Activated CD8-positive, alpha-beta T cell treated with anti-CD3 and anti-CD28 coated beads, Interleukin-2, amount 10 ng/mL, durations not matched to agents 7 days and 5 days (primary cell): ENCODE measurements at regions of chr18 and their contacts with region 1.

Region 1: DNA sequence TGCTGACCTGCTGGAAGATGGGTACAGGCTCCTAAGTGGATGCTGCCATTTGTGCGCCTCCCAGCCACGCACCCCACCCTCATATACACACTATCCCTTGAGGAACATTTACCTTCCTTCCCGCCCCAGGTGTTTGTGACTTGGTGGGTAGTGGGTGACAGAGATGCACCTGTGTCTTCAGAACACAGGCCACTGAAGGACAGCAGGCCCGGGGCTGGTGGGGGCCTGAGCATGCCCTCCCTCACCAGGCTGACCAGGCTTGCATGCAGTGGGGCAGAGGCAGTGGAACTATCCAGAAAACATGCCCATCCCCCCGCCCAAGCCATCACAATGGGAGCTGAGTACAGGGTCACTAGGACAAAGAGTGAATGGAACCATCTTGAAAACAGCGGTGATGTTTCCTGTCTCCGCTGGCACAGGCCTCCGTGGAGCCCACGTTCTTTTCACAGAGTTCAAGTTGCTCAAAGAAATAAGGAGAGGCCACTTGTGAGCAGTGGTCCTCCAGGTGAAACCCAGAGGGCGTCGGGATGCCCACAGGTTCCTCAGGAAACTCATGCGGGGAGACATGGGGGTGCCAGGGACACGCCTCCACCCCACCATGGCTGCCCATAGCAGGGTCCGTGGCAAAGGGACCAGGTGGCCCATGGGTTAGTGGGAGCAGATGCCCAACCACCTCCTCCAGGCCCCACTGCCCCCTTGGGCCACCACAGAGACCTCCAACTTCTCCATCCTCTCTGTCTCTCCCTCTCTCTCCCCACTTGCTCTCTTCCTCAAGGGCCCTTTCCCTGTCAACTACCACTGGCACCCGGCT is 90.9 kb downstream of the MALT1 start:
- DNase-seq: peak; percentile 18
- ATAC-seq: no peak
- H3K4me3 Mint-ChIP-seq: no peak overlapping the region
- H3K27ac Mint-ChIP-seq: peak overlapping the region; percentile 12
- H3K4me1 Mint-ChIP-seq: peaks cover 41% of the 10 kb centered on the region
- H3K27me3 Mint-ChIP-seq: peaks cover 29% of the 10 kb centered on the region

Region 2: DNA sequence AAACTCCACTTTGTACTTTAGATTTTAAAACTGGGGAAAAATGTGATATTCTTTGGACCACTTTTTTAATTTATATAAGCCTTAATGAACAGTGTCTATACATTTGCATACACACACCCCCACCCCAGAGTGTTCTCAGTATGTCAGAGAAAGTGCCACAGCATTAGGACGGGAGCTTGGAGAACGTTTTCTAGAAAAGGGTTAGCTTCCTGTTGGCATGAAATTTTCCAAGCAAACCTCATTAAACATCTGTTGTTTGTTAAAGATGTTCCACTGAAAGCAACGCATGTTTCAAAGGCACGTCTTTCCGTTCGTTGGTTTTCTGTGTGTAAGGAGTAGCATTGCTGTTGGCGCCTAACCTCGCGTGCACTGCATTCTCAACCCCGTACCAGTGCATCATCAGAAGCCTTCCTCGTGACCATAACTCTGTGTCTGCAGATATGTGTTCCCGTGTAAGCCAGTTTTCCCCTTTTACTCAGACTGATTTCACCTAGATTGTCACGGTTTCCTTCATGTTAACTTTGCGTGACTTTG is 361.8 kb before region 1 on chr18:
- CTCF ChIA-PET with region 1: interaction called, 15 read pairs
- POLR2A ChIA-PET with region 1: no interaction called
- DNase-seq: no peak
- ATAC-seq: no peak
- H3K4me3 Mint-ChIP-seq: no peak overlapping the region
- H3K27ac Mint-ChIP-seq: no peak overlapping the region
- H3K4me1 Mint-ChIP-seq: peaks cover 13% of the 10 kb centered on the region
- H3K27me3 Mint-ChIP-seq: no peaks in the 10 kb centered on the region

Region 3: GRCh38 chr18:58501066-58501896 is 260.9 kb before region 1 on chr18:
- CTCF ChIA-PET with region 1: interaction called, 31 read pairs
- POLR2A ChIA-PET with region 1: interaction called, 3 read pairs
- DNase-seq: no peak
- ATAC-seq: no peak
- H3K4me3 Mint-ChIP-seq: no peak overlapping the region
- H3K27ac Mint-ChIP-seq: no peak overlapping the region
- H3K4me1 Mint-ChIP-seq: peaks cover 5% of the 10 kb centered on the region
- H3K27me3 Mint-ChIP-seq: peaks cover 17% of the 10 kb centered on the region

Region 4: GRCh38 chr18:58605027-58606020 is 156.9 kb before region 1 on chr18:
- CTCF ChIA-PET with region 1: interaction called, 16 read pairs
- POLR2A ChIA-PET with region 1: no interaction called
- DNase-seq: peak; percentile 40
- ATAC-seq: peak; percentile 75
- H3K4me3 Mint-ChIP-seq: no peak overlapping the region
- H3K27ac Mint-ChIP-seq: no peak overlapping the region
- H3K4me1 Mint-ChIP-seq: peaks cover 30% of the 10 kb centered on the region
- H3K27me3 Mint-ChIP-seq: peaks cover 3% of the 10 kb centered on the region

Region 5: GRCh38 chr18:58699551-58699950 is 62.6 kb before region 1 on chr18:
- CTCF ChIA-PET with region 1: interaction called, 10 read pairs
- POLR2A ChIA-PET with region 1: no interaction called
- DNase-seq: no peak
- ATAC-seq: no peak
- H3K4me3 Mint-ChIP-seq: no peak overlapping the region
- H3K27ac Mint-ChIP-seq: no peak overlapping the region
- H3K4me1 Mint-ChIP-seq: peaks cover 35% of the 10 kb centered on the region
- H3K27me3 Mint-ChIP-seq: no peaks in the 10 kb centered on the region

Region 6: DNA sequence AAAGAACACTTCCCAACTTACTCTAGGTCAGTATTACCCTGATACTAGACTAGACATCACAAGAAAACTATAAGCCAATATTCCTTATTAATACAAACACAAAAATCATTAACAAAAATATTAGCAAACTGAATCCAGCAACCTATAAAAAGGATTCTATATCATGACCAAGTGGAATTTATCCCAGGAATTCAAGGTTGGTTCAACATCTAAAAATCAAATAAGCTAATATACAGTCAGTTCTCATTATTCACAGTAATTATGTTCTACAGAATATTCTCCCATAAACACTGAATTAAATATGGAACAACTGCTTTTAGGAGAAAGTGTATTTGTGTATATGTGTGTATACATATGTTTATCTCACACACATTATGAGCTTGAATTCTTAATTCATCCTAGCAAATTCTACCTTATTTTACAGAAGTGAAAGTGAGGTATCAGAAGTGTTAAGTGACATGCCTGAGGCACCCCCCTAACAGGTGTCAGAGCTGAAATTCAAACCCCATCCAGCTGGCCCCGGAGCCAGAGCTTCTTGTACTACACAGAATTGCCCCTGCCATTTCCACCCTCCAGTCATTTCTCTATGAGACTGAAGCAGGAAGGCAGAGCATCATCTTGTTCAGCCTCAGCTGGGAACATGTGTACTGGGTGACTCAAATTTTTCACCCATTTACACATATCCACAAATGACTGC is 13.1 kb before region 1 on chr18:
- CTCF ChIA-PET with region 1: interaction called, 49 read pairs
- POLR2A ChIA-PET with region 1: no interaction called
- DNase-seq: no peak
- ATAC-seq: no peak
- H3K4me3 Mint-ChIP-seq: no peak overlapping the region
- H3K27ac Mint-ChIP-seq: no peak overlapping the region
- H3K4me1 Mint-ChIP-seq: peaks cover 10% of the 10 kb centered on the region
- H3K27me3 Mint-ChIP-seq: no peaks in the 10 kb centered on the region